ENCODE measurements at regions of chr6 and their contacts with region 1.

Region 1: DNA sequence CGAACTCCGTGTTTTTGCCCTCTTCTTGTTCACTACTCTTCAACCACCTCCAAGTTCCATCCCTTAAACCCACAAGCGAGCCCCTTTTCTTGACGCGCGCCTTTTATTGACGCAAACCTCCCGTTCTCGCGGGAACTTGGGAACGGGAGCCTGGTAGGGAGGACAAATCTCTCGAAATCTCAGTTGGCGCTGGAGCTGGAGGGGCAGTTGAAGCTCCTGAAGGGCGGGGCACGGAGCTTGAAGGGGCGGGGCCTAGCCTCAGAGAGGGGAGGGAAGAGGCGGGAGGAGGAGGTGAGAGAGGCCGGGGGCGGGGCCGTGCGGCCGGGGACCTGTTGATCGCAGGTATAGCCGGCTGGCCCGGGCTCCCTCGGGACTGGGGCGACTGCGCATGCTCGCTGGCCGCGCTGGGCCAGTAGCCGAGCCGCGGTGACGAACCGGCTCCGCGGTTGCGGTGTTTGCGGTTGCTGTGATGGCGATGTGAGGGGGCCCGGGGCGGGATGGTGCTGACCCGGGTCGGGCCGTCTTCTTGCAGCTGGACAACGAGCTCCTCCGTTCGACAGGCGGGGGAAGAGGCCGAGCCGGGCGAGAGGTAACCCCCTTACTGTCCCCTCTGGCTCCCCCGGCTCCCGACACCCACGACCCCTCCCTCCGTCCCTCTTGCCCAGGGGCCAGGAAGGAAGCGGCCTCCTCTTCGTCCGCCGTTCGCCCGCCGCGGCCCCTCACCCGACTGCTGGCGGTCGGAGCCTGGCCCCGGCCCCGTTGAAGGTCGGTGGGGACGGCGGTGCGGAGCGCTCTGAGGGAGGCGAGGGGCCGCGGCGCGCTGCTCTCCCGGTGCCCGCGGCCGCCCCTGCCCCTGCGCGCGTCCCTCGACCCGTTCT is at the start of gene FAM135A:
- DNase-seq: peak; percentile 96
- ATAC-seq: peak; percentile 98
- H3K4me3 Mint-ChIP-seq: peak within 1 kb of the TSS; percentile 92
- H3K27ac Mint-ChIP-seq: peak within 1 kb of the TSS; percentile 86
- H3K4me1 Mint-ChIP-seq: peaks cover 23% of the 10 kb centered on the region
- H3K27me3 Mint-ChIP-seq: no peaks in the 10 kb centered on the region
- CTCF ChIP-seq: no peak
- total RNA-seq, gene FAM135A: 15.6 and 18.2 TPM in 2 replicates

Region 2: GRCh38 chr6:70369332-70369950 is 43.9 kb before region 1 on chr6:
- CTCF ChIA-PET with region 1: no interaction called
- POLR2A ChIA-PET with region 1: interaction called, 3 read pairs
- intact Hi-C with region 1: loop called (anchors 2 kb)
- DNase-seq: peak; percentile 27
- ATAC-seq: peak; percentile 92
- H3K4me3 Mint-ChIP-seq: no peak overlapping the region
- H3K27ac Mint-ChIP-seq: no peak overlapping the region
- H3K4me1 Mint-ChIP-seq: no peaks in the 10 kb centered on the region
- H3K27me3 Mint-ChIP-seq: peaks cover 21% of the 10 kb centered on the region
- CTCF ChIP-seq: peak; percentile 73

Region 3: DNA sequence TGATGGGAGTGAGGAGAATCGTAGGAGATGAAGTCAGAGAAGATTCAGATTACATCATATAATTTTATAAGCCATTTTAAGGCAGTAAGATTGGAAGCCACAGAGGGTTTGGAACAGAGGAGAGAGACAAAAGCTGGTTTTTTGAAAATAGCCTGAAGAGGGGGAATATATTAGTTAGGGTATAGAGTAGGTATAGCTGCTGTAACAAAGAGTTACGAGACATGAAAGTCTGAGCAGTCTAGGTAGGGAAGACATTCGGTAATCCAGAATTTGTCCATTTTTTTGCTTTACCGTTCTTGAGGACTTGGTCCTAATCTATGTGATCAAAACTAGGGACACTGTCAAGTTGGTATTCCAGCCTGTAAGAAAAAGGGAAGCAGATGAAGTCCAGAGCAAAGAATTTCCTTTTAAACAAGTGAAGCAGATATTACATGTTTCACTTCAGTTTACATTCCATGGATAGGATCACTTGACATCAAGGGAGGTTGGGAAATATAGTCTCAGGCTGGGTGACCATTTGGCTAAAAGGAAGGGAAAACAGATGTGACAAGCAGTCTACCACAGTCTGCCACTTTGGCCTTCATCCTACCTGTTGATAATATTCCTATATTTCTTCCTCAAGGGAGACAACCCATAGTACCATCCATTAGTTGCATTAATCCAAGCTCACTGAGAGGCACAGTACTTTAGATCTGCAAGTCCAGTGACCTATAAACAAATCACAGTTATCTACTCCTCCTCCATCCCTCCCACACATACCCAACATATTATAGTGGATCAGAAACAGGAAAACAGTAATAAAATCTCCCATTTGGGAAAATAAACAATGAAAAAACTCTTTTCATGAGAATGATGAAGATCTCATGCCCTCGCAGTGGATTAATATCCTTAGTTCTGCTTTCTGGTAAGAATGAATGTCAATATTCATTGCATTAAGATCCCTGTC is 10.1 kb after region 1 on chr6:
- CTCF ChIA-PET with region 1: no interaction called
- POLR2A ChIA-PET with region 1: interaction called, 4 read pairs
- intact Hi-C with region 1: loop called (anchors 2 kb)
- DNase-seq: no peak
- ATAC-seq: no peak
- H3K4me3 Mint-ChIP-seq: no peak overlapping the region
- H3K27ac Mint-ChIP-seq: no peak overlapping the region
- H3K4me1 Mint-ChIP-seq: no peaks in the 10 kb centered on the region
- H3K27me3 Mint-ChIP-seq: no peaks in the 10 kb centered on the region
- CTCF ChIP-seq: no peak

Region 4: DNA sequence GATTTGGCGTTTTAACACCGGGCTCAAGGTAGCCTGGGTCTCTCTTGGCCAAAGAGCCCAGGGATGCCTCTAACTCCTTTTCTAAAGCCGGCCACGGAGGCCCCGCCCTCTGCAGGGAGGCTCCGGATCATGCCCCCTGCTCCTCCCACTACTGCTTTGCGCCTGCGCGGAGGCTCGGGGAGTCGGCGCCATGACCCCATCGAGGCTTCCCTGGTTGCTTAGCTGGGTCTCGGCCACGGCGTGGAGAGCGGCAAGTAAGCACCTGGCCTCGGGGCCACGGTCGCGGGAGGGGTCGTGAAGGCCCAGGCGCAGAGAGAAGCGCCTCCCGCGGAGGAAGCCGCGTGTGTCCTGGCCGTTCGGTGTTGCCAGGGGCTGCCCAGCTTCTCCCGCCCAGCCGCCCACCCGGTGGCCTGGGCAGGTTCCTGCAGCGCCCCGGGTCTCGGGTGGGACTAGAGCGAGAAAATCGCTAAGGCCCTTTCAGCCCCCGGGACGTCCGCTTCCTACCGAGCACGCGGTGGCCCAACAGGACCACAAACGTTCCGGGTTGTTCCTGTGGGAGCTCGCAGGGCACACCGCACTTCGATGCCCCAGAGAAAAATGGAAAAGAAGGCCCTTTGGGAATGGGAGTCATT is 153.5 kb after region 1 on chr6 and contains the start of gene SDHAF4:
- CTCF ChIA-PET with region 1: no interaction called
- POLR2A ChIA-PET with region 1: interaction called, 6 read pairs
- intact Hi-C with region 1: loop called (anchors 1 kb)
- DNase-seq: peak; percentile 93
- ATAC-seq: peak; percentile 99
- H3K4me3 Mint-ChIP-seq: peak within 1 kb of the TSS; percentile 86
- H3K27ac Mint-ChIP-seq: peak within 1 kb of the TSS; percentile 89
- H3K4me1 Mint-ChIP-seq: peaks cover 15% of the 10 kb centered on the region
- H3K27me3 Mint-ChIP-seq: no peaks in the 10 kb centered on the region
- CTCF ChIP-seq: no peak
- total RNA-seq, gene SDHAF4: 7.6 and 8.3 TPM in 2 replicates

Region 5: DNA sequence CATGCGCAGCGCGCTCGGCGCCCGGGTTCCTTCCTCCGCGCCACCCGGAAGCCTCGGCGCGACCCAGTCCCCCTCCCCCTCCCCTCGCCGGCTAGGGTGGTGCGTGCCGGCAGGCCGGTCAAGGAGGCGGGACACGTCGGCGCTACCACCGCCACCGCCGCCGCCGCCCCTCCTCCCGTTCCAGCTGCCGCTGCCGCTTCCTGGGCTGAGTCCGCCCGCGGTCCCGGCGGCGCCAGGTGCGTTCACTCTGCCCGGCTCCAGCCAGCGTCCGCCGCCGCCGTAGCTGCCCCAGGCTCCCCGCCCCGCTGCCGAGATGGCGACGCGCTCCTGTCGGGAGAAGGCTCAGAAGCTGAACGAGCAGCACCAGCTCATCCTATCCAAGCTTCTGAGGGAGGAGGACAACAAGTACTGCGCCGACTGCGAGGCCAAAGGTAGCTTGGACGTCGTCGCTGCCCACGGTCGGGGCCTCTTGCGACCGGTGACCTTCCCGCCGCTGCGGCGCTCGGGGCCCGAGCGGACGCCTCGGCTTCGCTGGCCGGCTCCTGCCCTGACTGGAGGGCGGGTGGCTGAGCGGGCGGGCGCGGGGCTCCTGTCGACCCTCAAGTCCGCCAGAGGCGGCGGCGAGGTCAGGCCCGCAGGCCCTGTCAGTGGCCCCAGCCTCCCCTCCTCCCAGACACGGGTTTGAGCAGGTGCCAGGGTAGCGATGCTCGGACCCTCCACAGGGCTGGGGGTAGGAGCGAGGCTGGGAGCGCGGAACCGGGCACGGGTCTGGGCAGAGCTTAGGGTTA is 254.6 kb after region 1 on chr6 and contains the start of gene SMAP1:
- CTCF ChIA-PET with region 1: no interaction called
- POLR2A ChIA-PET with region 1: interaction called, 21 read pairs
- intact Hi-C with region 1: loop called (anchors 1 kb)
- DNase-seq: peak; percentile 94
- ATAC-seq: peak; percentile 96
- H3K4me3 Mint-ChIP-seq: peak within 1 kb of the TSS; percentile 85
- H3K27ac Mint-ChIP-seq: peak within 1 kb of the TSS; percentile 92
- H3K4me1 Mint-ChIP-seq: peaks cover 41% of the 10 kb centered on the region
- H3K27me3 Mint-ChIP-seq: no peaks in the 10 kb centered on the region
- CTCF ChIP-seq: no peak
- total RNA-seq, gene SMAP1: 20.7 and 21.6 TPM in 2 replicates

Region 6: DNA sequence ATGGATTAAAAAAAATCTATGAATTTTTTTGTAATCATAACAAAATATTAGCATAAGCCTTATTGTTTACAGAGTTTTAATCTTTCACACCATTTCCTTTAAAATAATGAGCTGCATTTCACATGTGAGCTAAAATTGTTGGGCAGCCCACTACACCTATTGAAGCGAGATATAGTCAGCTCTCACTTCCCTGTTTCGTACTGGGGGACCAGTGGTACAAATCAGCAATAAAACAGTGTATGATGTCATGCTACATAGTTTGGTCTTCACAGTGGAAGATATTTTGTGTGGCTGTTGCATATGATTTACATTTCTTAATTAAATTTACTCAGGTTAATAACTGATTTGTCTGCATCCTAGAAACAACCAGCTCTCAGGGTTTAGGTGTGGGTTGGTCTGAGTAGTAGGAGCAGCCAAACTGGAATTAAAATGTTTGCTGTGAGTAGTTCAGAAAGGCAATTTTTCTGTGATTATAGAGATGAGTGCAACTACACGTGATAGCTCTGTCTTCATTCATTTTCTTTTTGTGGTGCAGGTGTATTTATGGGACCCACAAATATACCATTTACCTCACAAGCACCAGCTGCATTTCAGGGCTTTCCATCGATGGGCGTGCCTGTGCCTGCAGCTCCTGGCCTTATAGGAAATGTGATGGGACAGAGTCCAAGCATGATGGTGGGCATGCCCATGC is 444.2 kb after region 1 on chr6:
- CTCF ChIA-PET with region 1: no interaction called
- POLR2A ChIA-PET with region 1: interaction called, 3 read pairs
- intact Hi-C with region 1: loop called (anchors 5 kb)
- DNase-seq: no peak
- ATAC-seq: peak; percentile 100
- H3K4me3 Mint-ChIP-seq: peak overlapping the region; percentile 11
- H3K27ac Mint-ChIP-seq: no peak overlapping the region
- H3K4me1 Mint-ChIP-seq: peaks cover 24% of the 10 kb centered on the region
- H3K27me3 Mint-ChIP-seq: no peaks in the 10 kb centered on the region
- CTCF ChIP-seq: no peak